MCF 10A (cell line): ENCODE measurements at regions of chr1 and their contacts with region 1.

Region 1: DNA sequence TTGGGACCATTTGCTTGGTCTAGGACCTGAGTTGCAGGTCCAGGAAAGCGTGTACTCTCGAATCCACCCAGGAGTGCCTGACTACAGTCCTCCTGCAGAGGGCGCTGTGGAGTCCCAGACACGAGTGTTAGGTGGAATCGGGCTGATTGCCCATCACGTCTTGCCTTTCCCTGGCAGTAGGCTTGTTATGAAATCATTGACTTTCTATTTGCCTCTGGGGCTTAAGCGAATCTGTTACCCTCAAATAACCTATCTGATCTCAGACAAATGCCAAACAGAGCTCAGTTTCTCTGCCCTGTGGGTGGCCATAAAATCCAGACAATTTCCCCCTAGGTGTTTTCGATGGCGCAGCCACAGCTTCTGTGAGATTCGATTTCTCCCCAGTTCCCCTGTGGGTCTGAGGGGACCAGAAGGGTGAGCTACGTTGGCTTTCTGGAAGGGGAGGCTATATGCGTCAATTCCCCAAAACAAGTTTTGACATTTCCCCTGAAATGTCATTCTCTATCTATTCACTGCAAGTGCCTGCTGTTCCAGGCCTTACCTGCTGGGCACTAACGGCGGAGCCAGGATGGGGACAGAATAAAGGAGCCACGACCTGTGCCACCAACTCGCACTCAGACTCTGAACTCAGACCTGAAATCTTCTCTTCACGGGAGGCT is at the start of gene IL20:
- DNase-seq: peak; percentile 100
- H3K4me3 Mint-ChIP-seq: no peak within 1 kb of the TSS
- H3K27ac Mint-ChIP-seq: no peak within 1 kb of the TSS
- H3K4me1 Mint-ChIP-seq: peaks cover 32% of the 10 kb centered on the region
- H3K27me3 Mint-ChIP-seq: peaks cover 17% of the 10 kb centered on the region
- CTCF ChIP-seq: peak; percentile 100
- total RNA-seq, gene IL20: not detected in 2 replicates

Region 2: DNA sequence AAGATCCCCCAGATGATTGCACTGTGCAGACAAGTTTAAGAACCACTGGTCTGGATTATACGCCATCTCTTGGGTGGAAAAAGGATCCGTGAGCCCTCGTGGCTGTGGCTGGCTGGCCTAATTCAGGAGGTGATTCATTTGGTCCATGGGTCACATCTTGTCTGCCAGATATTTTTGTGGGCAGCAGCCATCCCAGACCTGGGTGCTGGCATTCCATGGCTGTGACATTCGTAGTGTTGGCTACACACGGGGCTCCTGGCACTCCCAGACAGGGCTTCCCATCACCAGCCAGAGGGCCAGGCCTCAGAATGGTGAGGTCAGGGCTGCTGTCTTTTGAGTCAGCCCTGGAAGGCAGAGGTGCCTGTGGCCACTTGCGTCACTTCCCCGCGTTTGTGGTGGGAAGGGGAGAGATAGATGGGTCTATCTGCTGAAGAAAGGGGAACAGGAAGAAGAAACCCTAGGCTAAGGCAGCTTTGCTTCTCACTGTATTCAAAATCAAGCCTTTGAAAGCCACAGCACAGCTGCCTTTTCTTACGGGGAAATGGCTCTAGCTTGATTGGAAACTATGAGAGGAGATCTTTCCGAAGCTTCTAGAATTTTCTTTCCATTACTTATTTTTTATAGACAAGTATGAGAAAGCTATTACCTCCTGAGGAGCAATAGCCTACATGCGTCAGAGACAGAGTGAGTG is 285.2 kb before region 1 on chr1:
- CTCF ChIA-PET with region 1: no interaction called
- POLR2A ChIA-PET with region 1: no interaction called
- intact Hi-C with region 1: no loop called
- DNase-seq: peak; percentile 23
- H3K4me3 Mint-ChIP-seq: no peak overlapping the region
- H3K27ac Mint-ChIP-seq: no peak overlapping the region
- H3K4me1 Mint-ChIP-seq: peaks cover 17% of the 10 kb centered on the region
- H3K27me3 Mint-ChIP-seq: no peaks in the 10 kb centered on the region
- CTCF ChIP-seq: no peak

Region 3: DNA sequence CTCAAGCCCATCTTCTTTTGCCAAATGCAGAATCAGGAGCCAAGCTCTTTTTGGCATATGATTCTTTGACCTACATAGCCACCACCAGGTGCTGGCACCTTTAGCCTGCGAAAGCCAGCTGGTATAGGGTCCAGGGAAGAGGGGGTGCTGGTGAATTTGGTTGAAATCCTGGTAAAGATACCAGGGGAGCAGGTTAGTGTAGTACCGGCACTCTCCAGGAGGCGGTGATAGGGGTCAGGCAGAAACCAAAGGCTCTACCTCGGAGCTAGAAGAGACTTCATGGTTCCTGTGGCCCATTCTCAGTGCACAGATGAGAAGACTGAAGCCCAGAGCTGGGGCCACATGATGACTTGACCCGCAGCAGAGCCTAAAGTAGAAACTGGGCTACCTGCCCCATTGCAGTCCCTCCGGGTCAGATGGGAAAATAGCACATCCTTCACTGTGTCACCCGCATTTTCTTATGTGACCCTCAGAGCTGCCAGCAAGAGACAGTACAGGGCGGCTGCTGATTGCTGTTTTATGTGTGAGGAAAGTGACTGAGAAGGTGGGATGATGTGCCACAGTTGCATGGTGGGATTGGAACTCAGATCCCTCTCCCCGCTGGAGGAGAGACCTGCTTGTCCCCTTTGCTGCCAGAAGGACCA is 130.5 kb before region 1 on chr1:
- CTCF ChIA-PET with region 1: interaction called, 14 read pairs
- POLR2A ChIA-PET with region 1: no interaction called
- intact Hi-C with region 1: loop called (anchors 1 kb)
- DNase-seq: peak; percentile 73
- H3K4me3 Mint-ChIP-seq: no peak overlapping the region
- H3K27ac Mint-ChIP-seq: peak overlapping the region; percentile 6
- H3K4me1 Mint-ChIP-seq: peaks cover 9% of the 10 kb centered on the region
- H3K27me3 Mint-ChIP-seq: no peaks in the 10 kb centered on the region
- CTCF ChIP-seq: peak; percentile 97

Region 4: DNA sequence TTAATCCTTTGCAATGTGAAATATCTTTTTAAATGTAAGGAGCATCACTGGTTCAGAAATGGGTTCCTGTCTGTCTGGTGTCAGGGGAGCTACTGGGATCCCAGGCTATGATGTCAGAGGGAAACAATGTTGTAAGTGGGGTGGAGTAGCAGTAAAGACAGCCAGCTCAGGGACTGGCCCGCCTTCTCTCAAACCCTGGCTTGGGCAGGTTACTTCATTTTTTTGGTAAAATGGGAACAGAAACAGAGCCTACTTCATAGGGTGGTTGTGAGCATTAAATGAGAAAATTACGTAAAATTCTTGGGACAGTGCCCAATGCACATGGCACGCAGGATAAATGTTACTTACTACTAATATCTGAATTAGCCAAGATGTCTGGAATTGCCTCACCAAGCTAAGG is 30.4 kb before region 1 on chr1:
- CTCF ChIA-PET with region 1: interaction called, 21 read pairs
- POLR2A ChIA-PET with region 1: interaction called, 3 read pairs
- intact Hi-C with region 1: no loop called
- DNase-seq: peak; percentile 63
- H3K4me3 Mint-ChIP-seq: no peak overlapping the region
- H3K27ac Mint-ChIP-seq: peak overlapping the region; percentile 21
- H3K4me1 Mint-ChIP-seq: peaks cover 31% of the 10 kb centered on the region
- H3K27me3 Mint-ChIP-seq: no peaks in the 10 kb centered on the region
- CTCF ChIP-seq: no peak

Region 5: GRCh38 chr1:206878456-206878855 is 13.3 kb after region 1 on chr1:
- CTCF ChIA-PET with region 1: interaction called, 30 read pairs
- POLR2A ChIA-PET with region 1: interaction called, 9 read pairs
- intact Hi-C with region 1: no loop called
- DNase-seq: no peak
- H3K4me3 Mint-ChIP-seq: no peak overlapping the region
- H3K27ac Mint-ChIP-seq: no peak overlapping the region
- H3K4me1 Mint-ChIP-seq: peaks cover 19% of the 10 kb centered on the region
- H3K27me3 Mint-ChIP-seq: no peaks in the 10 kb centered on the region
- CTCF ChIP-seq: no peak

Region 6: DNA sequence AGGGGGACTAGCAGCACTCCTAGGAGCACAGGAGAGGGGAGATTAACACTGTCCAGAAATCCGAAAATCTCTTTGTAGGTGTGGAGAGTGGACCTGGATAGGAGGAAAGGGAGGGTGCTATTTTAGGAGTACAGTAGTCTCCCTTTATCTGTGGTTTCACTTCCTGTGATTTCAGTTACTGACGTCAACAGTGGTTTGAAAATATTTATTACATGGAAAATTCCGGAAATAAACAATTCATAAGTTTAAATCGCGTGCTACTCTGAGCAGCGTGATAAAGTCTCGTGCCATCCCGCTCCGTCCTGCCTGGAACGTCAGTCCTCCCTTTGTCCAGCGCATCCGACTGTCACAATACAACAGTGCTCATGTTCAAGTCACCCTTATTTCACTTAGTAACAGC is 25.5 kb after region 1 on chr1:
- CTCF ChIA-PET with region 1: interaction called, 30 read pairs
- POLR2A ChIA-PET with region 1: interaction called, 30 read pairs
- intact Hi-C with region 1: loop called (anchors 1 kb)
- DNase-seq: peak; percentile 96
- H3K4me3 Mint-ChIP-seq: peak overlapping the region; percentile 45
- H3K27ac Mint-ChIP-seq: peak overlapping the region; percentile 95
- H3K4me1 Mint-ChIP-seq: peaks cover 91% of the 10 kb centered on the region
- H3K27me3 Mint-ChIP-seq: no peaks in the 10 kb centered on the region
- CTCF ChIP-seq: no peak